Mammary epithelial cell (primary cell): ENCODE measurements at regions of chr14 and their contacts with region 1.

Region 1: GRCh38 chr14:104563742-104564615 is 15.6 kb upstream of the C14orf180 start:
- DNase-seq: peak; percentile 33
- H3K4me3 ChIP-seq: no peak overlapping the region
- H3K27ac ChIP-seq: no peak overlapping the region
- H3K4me1 ChIP-seq: no peaks in the 10 kb centered on the region
- H3K27me3 ChIP-seq: peaks cover 15% of the 10 kb centered on the region
- CTCF ChIP-seq: peak; percentile 39 to 81

Region 2: GRCh38 chr14:103989964-103990363 is 574.0 kb before region 1 on chr14:
- CTCF ChIA-PET with region 1: no interaction called
- dilution Hi-C with region 1: no loop called
- in situ Hi-C with region 1: no loop called
- intact Hi-C with region 1: no loop called
- DNase-seq: no peak
- H3K4me3 ChIP-seq: no peak overlapping the region
- H3K27ac ChIP-seq: no peak overlapping the region
- H3K4me1 ChIP-seq: no peaks in the 10 kb centered on the region
- H3K27me3 ChIP-seq: no peaks in the 10 kb centered on the region
- CTCF ChIP-seq: no peak

Region 3: GRCh38 chr14:104078031-104078455 is 485.9 kb before region 1 on chr14:
- CTCF ChIA-PET with region 1: interaction called, 6 read pairs
- dilution Hi-C with region 1: no loop called
- in situ Hi-C with region 1: no loop called
- intact Hi-C with region 1: loop called (anchors 1 kb)
- DNase-seq: peak; percentile 78
- H3K4me3 ChIP-seq: no peak overlapping the region
- H3K27ac ChIP-seq: no peak overlapping the region
- H3K4me1 ChIP-seq: no peaks in the 10 kb centered on the region
- H3K27me3 ChIP-seq: no peaks in the 10 kb centered on the region
- CTCF ChIP-seq: peak; percentile 100

Region 4: DNA sequence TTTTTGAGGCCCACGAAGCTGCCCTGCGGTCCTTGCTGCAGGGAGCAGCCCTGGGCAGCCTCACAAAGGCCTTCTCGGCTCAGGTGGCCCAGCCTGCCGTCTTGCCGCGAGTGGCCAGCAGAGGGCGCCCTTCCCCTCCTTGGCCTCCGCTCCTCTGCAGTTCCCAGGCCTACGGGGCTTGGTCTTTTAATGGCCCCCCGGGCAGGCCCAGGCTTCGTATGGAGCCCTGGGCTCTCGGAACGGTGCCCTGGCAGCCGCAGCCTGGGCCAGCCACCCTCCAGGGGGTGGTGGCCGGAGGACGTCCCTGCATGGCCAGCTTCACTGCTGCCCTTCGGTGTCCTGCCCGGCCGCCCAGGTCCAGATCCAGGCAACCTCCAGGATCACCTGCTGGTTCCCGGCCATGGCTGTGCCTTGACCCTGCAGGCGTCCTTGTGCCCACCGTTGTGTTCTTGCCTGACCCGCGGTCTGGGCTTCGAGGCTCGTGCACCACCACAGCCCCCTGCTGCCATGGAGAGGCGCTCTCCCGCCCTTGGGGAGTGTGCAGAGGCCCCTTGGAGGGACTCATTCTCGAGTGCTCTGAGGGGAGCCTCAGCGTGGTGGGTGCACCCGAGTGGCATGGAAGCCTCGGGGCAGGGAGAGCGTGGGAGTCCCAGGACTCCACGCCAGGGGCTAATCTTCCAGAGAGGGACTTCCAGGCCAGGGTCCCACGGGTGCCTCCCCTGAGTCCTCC is 469.1 kb before region 1 on chr14:
- CTCF ChIA-PET with region 1: no interaction called
- dilution Hi-C with region 1: no loop called
- in situ Hi-C with region 1: no loop called
- intact Hi-C with region 1: loop called (anchors 5 kb)
- DNase-seq: peak; percentile 26
- H3K4me3 ChIP-seq: no peak overlapping the region
- H3K27ac ChIP-seq: no peak overlapping the region
- H3K4me1 ChIP-seq: no peaks in the 10 kb centered on the region
- H3K27me3 ChIP-seq: peaks cover 3% of the 10 kb centered on the region
- CTCF ChIP-seq: peak; percentile 73 to 93

Region 5: DNA sequence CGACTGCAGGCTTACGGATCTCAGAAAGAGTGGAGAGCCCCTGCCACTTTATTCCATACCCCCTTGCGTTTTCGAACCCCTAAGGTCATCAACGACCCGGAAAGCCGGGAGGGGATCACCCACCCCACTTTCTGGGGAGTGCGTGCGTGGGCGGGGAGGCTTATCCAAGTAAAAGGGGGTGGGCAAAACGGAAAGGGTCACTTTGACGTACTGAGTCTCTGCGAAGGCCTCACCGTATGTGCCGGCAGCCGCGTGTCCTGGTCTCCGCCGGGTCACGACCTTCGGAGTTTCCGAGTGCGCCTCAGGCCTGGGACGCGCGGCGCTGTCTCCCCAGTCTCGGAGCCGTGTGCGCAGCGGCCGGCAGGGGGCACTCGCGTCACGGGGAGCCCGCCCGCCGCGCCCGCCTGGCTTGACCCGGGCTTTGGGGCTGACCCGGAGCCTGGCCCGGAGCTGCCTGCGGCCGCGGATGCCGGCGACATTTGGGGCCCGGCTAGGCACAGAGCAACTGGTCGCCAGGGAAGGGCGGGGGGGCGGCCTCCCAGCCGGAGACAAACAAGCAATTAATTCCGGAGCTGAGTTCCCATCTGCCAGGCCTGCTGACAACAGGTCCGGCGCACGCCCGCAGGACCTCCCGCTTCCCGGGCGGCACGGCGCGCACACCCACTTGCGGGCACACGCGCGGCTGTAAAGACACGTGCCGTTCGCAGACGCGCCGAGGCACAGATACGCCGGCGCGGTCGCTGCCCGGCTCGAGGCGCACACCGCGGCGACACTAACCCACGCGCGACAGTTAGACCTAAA is 426.5 kb before region 1 on chr14:
- CTCF ChIA-PET with region 1: no interaction called
- dilution Hi-C with region 1: no loop called
- in situ Hi-C with region 1: loop called (anchors 5 to 25 kb)
- intact Hi-C with region 1: loop called (anchors 1 kb)
- DNase-seq: no peak
- H3K4me3 ChIP-seq: no peak overlapping the region
- H3K27ac ChIP-seq: no peak overlapping the region
- H3K4me1 ChIP-seq: peaks cover 12% of the 10 kb centered on the region
- H3K27me3 ChIP-seq: peaks cover 37% of the 10 kb centered on the region
- CTCF ChIP-seq: peak; percentile 32 to 68

Region 6: GRCh38 chr14:104370256-104370870 is 193.6 kb before region 1 on chr14:
- CTCF ChIA-PET with region 1: no interaction called
- dilution Hi-C with region 1: no loop called
- in situ Hi-C with region 1: no loop called
- intact Hi-C with region 1: no loop called
- DNase-seq: no peak
- H3K4me3 ChIP-seq: no peak overlapping the region
- H3K27ac ChIP-seq: no peak overlapping the region
- H3K4me1 ChIP-seq: no peaks in the 10 kb centered on the region
- H3K27me3 ChIP-seq: no peaks in the 10 kb centered on the region
- CTCF ChIP-seq: no peak

Region 7: DNA sequence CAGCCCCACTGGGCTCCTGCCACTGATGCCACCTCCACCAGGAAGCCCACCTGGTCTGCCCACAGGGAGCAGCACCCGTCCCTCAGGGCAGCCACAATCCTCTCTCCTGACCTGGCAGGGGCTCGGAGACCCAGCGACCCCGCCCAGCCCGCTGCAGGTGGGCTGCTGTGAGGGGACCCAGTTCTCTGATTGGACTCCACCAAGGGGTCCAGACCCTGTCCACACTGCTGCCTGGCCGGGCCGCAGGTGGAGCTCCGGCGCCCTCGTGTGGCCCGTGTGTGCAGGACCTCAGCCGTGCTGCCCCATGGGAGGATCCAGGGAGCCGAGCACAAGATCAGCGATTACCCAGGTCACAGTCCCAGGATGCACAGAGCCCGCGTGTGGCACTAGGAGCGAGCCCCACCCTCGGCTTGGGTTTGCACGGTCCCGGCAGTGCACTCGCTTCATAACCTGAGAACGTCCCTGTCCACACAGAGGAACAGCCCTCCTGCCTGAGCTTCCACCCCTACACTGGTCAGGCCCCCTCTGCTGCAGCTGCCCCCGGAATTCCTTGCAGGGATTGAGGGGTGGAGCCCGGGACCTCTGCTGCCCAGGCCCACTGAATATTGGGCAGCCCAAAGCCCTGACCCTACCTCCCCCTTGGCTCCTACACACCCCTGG is 76.0 kb after region 1 on chr14:
- CTCF ChIA-PET with region 1: no interaction called
- dilution Hi-C with region 1: no loop called
- in situ Hi-C with region 1: no loop called
- intact Hi-C with region 1: loop called (anchors 5 kb)
- DNase-seq: peak; percentile 30
- H3K4me3 ChIP-seq: no peak overlapping the region
- H3K27ac ChIP-seq: no peak overlapping the region
- H3K4me1 ChIP-seq: peaks cover 4% of the 10 kb centered on the region
- H3K27me3 ChIP-seq: no peaks in the 10 kb centered on the region
- CTCF ChIP-seq: peak; percentile 85 to 95

Region 8: DNA sequence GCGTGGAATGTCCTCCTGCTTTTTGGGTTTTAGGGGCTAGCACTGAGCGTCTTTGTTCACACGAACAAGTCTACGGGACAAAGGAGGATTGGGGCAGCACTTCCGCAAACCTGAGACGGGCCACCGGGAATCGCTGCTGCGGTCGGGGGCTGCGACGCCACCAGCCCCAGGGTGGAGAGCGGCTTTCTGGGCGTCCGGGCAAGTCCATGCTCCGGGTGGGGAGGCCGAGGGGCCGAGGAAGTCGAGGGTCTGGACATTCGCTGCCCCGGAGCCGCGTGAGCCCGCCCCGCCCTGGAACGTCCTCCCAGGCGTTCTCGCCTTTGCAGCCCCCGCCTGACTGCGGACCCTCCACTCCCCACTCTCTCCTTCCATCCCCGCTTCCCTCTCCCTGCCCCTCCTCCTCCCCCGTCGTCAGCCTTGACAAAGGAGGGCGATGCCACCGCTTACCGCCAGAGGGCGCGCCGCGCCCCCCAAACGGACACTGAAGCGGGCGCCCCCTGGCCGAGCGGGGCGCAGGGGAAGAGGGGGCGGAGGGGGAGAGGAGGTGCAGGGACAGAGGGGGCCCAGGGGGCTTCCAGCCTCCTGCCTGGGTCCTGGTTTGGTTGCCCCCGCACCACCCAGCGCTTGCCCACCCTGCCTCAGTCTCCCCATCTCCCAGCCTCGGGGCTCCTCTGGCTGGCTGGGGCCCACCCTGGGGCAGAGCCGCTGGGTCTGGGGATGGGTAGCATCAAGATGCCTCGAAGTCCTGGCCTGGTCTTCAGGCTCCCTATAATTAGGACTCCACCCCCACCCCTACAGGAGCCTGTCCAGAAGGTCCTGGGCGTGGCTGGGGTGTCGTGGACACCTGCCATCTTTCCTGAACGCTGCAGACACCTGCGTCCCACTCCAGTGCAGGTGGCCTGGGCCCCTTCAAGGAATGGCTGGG is 86.3 kb after region 1 on chr14:
- CTCF ChIA-PET with region 1: no interaction called
- dilution Hi-C with region 1: no loop called
- in situ Hi-C with region 1: no loop called
- intact Hi-C with region 1: no loop called
- DNase-seq: no peak
- H3K4me3 ChIP-seq: peak overlapping the region; percentile 48 to 63 (median 59)
- H3K27ac ChIP-seq: no peak overlapping the region
- H3K4me1 ChIP-seq: peaks cover 9% of the 10 kb centered on the region
- H3K27me3 ChIP-seq: no peaks in the 10 kb centered on the region
- CTCF ChIP-seq: peak; percentile 83 to 99